HepG2 (cell line): ENCODE measurements at regions of chr3 and their contacts with region 1.

Region 1: GRCh38 chr3:171883257-171883892 is 40.2 kb downstream of the TMEM212 start:
- DNase-seq: peak; percentile 92
- ATAC-seq: peak; percentile 89
- H3K4me3 ChIP-seq: peak overlapping the region in 2 of 3 experiments; percentile 22 to 49; a peak in 2 of 6 replicates
- H3K27ac ChIP-seq: peak overlapping the region; percentile 96
- H3K4me1 ChIP-seq: peaks cover 66% of the 10 kb centered on the region
- H3K27me3 ChIP-seq: no peaks in the 10 kb centered on the region
- CTCF ChIP-seq: no peak
- EP300 ChIP-seq: peak; percentile 21 to 97; a peak in 2 of 4 replicates
- POLR2A ChIP-seq: 0 out of 4 replicates have a peak, but pooled peaks of 1 of the 2 experiments have one; percentile 29
- RAD21 ChIP-seq: no peak

Region 2: DNA sequence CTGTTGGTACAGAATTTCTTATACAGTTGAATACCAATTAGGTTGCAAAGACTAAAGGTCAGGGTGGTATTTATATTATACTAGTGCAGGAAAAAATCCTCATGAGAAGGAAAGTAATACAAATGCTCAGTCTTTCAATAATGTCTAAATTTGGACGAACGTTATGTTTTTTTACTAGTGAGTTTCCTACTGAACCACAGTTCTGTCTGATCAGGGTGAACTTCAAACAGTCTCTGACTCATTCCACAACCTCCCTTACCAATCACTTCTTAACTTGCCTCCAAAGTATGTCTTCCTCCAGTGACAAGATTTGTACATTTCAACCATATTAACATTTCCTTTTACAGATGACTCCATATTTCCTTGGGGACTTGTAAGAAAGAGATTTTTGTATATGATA is 36.8 kb before region 1 on chr3:
- CTCF ChIA-PET with region 1: no interaction called
- POLR2A ChIA-PET with region 1: interaction called, 49 read pairs
- in situ Hi-C with region 1: no loop called
- intact Hi-C with region 1: loop called (anchors 1 kb)
- DNase-seq: no peak
- ATAC-seq: peak; percentile 34; the same call in 2 of the 3 replicates
- H3K4me3 ChIP-seq: no peak overlapping the region
- H3K27ac ChIP-seq: peak overlapping the region; percentile 100
- H3K4me1 ChIP-seq: peaks cover 88% of the 10 kb centered on the region
- H3K27me3 ChIP-seq: no peaks in the 10 kb centered on the region
- CTCF ChIP-seq: no peak
- EP300 ChIP-seq: 0 out of 4 replicates have a peak, but pooled peaks of 1 of the 2 experiments have one; percentile 6
- POLR2A ChIP-seq: no peak
- RAD21 ChIP-seq: no peak

Region 3: GRCh38 chr3:171943290-171944117 is 60.1 kb after region 1 on chr3:
- CTCF ChIA-PET with region 1: no interaction called
- POLR2A ChIA-PET with region 1: no interaction called
- in situ Hi-C with region 1: no loop called
- intact Hi-C with region 1: no loop called
- DNase-seq: no peak
- ATAC-seq: no peak
- H3K4me3 ChIP-seq: no peak overlapping the region
- H3K27ac ChIP-seq: no peak overlapping the region
- H3K4me1 ChIP-seq: peaks cover 30% of the 10 kb centered on the region
- H3K27me3 ChIP-seq: no peaks in the 10 kb centered on the region
- CTCF ChIP-seq: peak; percentile 30
- EP300 ChIP-seq: no peak
- POLR2A ChIP-seq: no peak
- RAD21 ChIP-seq: no peak

Region 4: GRCh38 chr3:172046268-172046915 is 163.0 kb after region 1 on chr3:
- CTCF ChIA-PET with region 1: no interaction called
- POLR2A ChIA-PET with region 1: interaction called, 3 read pairs
- in situ Hi-C with region 1: no loop called
- intact Hi-C with region 1: loop called (anchors 5 kb)
- DNase-seq: no peak
- ATAC-seq: no peak
- H3K4me3 ChIP-seq: peak overlapping the region; percentile 53 to 95 (median 93)
- H3K27ac ChIP-seq: peak overlapping the region; percentile 99
- H3K4me1 ChIP-seq: peaks cover 77% of the 10 kb centered on the region
- H3K27me3 ChIP-seq: no peaks in the 10 kb centered on the region; a peak in 1 of 5 replicates
- CTCF ChIP-seq: no peak
- EP300 ChIP-seq: no peak
- POLR2A ChIP-seq: no peak
- RAD21 ChIP-seq: no peak